Calu3 (cell line): ENCODE measurements at regions of chr1 and their contacts with region 1.

Region 1: GRCh38 chr1:156728597-156729462 is at the start of gene ISG20L2:
- DNase-seq: peak; percentile 97
- H3K4me3 Mint-ChIP-seq: no peak within 1 kb of the TSS
- H3K27ac Mint-ChIP-seq: no peak within 1 kb of the TSS
- H3K4me1 Mint-ChIP-seq: peaks cover 21% of the 10 kb centered on the region
- H3K27me3 Mint-ChIP-seq: no peaks in the 10 kb centered on the region
- CTCF ChIP-seq: no peak
- total RNA-seq, gene ISG20L2: 60.9 and 61.6 TPM in 2 replicates

Region 2: GRCh38 chr1:156625436-156626078 is 103.3 kb before region 1 on chr1:
- CTCF ChIA-PET with region 1: interaction called, 16 read pairs
- intact Hi-C with region 1: loop called (anchors 2 kb)
- DNase-seq: peak; percentile 72
- H3K4me3 Mint-ChIP-seq: peak overlapping the region; percentile 45
- H3K27ac Mint-ChIP-seq: no peak overlapping the region
- H3K4me1 Mint-ChIP-seq: peaks cover 12% of the 10 kb centered on the region
- H3K27me3 Mint-ChIP-seq: peaks cover 60% of the 10 kb centered on the region
- CTCF ChIP-seq: peak; percentile 87

Region 3: GRCh38 chr1:156689035-156689952 is 39.5 kb before region 1 on chr1:
- CTCF ChIA-PET with region 1: interaction called, 199 read pairs
- intact Hi-C with region 1: loop called (anchors 1 kb)
- DNase-seq: peak; percentile 92
- H3K4me3 Mint-ChIP-seq: peak overlapping the region; percentile 15
- H3K27ac Mint-ChIP-seq: peak overlapping the region; percentile 2
- H3K4me1 Mint-ChIP-seq: peaks cover 38% of the 10 kb centered on the region
- H3K27me3 Mint-ChIP-seq: no peaks in the 10 kb centered on the region
- CTCF ChIP-seq: peak; percentile 82

Region 4: DNA sequence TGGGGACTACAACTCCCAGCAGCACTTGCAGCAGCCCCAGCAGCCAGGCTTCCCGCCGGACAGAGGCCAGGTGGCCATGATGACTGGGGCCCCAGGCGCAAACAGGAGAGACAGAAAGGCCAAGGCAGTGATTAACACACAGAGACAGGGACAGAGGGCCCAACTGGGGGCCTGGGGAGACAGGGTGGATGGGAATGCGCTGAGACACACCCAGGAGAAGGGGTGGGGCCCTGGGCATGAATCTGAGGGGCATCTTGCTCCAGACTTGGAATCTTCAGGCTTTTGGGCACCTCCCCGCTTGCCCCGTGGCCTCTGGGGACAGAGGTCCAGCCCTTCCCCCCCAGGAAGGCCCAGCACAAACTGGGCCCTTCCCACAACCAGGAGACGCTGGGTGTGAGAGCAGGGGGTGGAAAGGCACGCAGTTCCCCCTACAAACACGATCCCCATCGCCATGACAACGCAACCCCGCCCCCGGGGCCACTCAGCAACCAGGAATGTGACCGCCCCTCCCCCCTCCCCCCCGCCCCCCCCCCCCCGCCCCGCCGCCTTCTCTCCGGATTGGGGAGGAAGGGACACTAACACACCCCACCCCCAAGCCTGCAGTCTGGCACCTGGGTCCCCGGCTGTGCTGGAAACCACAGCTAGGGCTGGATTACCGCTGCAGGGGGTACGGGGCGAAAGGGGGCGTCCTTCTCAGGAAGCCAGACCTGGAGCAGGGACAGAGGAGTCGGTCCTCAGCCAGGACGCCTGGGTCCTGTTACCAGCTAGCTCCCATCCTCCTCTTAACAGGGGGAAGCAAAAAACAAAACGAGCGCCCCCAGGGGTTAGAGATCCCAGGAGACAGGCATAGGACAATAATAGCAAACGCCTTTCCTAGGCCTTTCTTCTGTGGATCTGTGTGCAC is 18.1 kb after region 1 on chr1:
- CTCF ChIA-PET with region 1: interaction called, 17 read pairs
- intact Hi-C with region 1: loop called (anchors 2 kb)
- DNase-seq: peak; percentile 98
- H3K4me3 Mint-ChIP-seq: peak overlapping the region; percentile 67
- H3K27ac Mint-ChIP-seq: peak overlapping the region; percentile 85
- H3K4me1 Mint-ChIP-seq: peaks cover 60% of the 10 kb centered on the region
- H3K27me3 Mint-ChIP-seq: no peaks in the 10 kb centered on the region
- CTCF ChIP-seq: no peak

Region 5: GRCh38 chr1:156767101-156767878 is 38.5 kb after region 1 on chr1 and contains the start of gene PRCC:
- CTCF ChIA-PET with region 1: interaction called, 22 read pairs
- intact Hi-C with region 1: loop called (anchors 5 kb)
- DNase-seq: peak; percentile 98
- H3K4me3 Mint-ChIP-seq: no peak within 1 kb of the TSS
- H3K27ac Mint-ChIP-seq: no peak within 1 kb of the TSS
- H3K4me1 Mint-ChIP-seq: peaks cover 37% of the 10 kb centered on the region
- H3K27me3 Mint-ChIP-seq: no peaks in the 10 kb centered on the region
- CTCF ChIP-seq: no peak
- total RNA-seq, gene PRCC: 72.8 and 80.4 TPM in 2 replicates

Region 6: DNA sequence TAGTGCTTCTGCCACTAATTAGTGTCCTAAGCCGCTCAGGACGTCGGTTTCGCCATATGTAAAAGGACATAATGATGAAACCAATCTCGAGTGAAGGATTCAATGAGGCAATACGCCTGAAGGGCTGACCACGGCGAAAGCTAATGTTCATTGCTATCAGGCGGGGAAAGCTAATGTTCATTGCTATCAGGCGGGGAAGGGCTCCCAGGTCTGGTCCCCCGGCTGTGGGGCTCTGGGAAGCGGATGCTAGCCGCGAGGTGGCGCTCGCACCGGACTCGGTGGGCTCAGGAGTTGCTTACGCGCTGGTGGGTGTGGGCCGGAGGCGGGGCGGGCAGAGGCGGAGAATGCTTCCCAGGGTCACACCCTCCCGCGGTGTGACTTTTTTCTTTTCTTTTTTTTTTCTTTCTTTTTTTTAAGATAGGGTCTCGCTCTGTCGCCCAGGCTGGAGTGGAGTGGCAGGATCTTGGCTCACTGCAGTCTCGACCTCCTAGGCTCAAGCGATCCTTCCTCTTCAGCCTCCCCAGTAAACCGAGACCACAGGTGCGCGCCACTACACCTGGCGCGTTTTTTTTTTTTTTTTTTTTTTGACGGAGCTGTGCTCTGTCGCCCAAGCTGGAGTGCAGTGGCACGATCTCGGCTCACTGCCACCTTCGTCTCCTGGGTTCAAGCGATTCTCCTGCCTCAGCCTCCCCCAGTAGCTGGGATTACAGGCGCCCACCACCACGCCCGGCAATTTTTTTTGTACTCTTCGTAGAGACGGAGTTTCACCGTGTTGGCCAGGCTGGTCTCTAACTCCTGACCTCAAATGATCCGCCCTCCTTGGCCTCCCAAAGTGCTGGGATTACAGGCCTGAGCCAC is 163.6 kb after region 1 on chr1:
- CTCF ChIA-PET with region 1: interaction called, 10 read pairs
- intact Hi-C with region 1: loop called (anchors 1 kb)
- DNase-seq: peak; percentile 96
- H3K4me3 Mint-ChIP-seq: peak overlapping the region; percentile 33
- H3K27ac Mint-ChIP-seq: no peak overlapping the region
- H3K4me1 Mint-ChIP-seq: peaks cover 14% of the 10 kb centered on the region
- H3K27me3 Mint-ChIP-seq: peaks cover 58% of the 10 kb centered on the region
- CTCF ChIP-seq: peak; percentile 71